Heart right ventricle (tissue), 16 donors: ENCODE measurements at regions of chr20 and their contacts with region 1.

Region 1: GRCh38 chr20:21258411-21258810 is 44.7 kb upstream of the XRN2 start:
- DNase-seq: no peak
- ATAC-seq: no peak
- H3K4me3 ChIP-seq: no peak overlapping the region
- H3K27ac ChIP-seq: no peak overlapping the region
- H3K4me1 ChIP-seq: no peaks in the 10 kb centered on the region
- H3K27me3 ChIP-seq: no peaks in the 10 kb centered on the region
- CTCF ChIP-seq: no peak

Region 2: GRCh38 chr20:21391972-21392352 is 133.6 kb after region 1 on chr20:
- intact Hi-C with region 1: loop called in 1 of 10 experiments (anchors 1 kb)
- DNase-seq: no peak
- ATAC-seq: no peak
- H3K4me3 ChIP-seq: no peak overlapping the region
- H3K27ac ChIP-seq: no peak overlapping the region
- H3K4me1 ChIP-seq: peaks cover 0 to 17% (median 4%) of the 10 kb centered on the region in 9 donors
- H3K27me3 ChIP-seq: peaks cover 39 to 76% (median 62%) of the 10 kb centered on the region in 7 donors
- CTCF ChIP-seq: no peak